ENCODE measurements at regions of chr2 and their contacts with region 1.

Region 1: DNA sequence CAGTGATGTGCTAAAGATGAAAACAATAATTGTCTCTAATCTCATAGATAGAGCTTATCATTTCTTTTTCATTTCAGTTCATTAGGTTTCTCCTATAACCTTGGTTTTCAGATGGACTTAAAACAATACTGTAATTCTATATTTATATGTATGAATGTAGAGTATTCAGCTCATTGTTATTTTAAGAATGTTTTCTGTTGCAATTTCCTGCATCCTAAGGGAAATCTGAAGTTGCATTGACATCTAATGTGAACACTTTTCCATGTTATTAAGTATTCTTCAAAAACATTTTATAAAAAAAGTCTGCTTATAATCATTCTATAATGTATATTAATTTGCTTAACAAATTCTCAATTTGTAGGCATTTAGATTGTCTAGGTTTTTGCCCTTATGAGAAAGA is 288.9 kb downstream of the XIRP2 start:
- DNase-seq: peak; percentile 54
- ATAC-seq: 0 out of 2 replicates have a peak, but pooled peaks have one; percentile 22
- H3K4me3 ChIP-seq: no peak overlapping the region
- H3K27ac ChIP-seq: no peak overlapping the region
- H3K4me1 ChIP-seq: peaks cover 5% of the 10 kb centered on the region
- H3K27me3 ChIP-seq: no peaks in the 10 kb centered on the region
- CTCF ChIP-seq: no peak
- POLR2A ChIP-seq: no peak
- RAD21 ChIP-seq: no peak

Region 2: DNA sequence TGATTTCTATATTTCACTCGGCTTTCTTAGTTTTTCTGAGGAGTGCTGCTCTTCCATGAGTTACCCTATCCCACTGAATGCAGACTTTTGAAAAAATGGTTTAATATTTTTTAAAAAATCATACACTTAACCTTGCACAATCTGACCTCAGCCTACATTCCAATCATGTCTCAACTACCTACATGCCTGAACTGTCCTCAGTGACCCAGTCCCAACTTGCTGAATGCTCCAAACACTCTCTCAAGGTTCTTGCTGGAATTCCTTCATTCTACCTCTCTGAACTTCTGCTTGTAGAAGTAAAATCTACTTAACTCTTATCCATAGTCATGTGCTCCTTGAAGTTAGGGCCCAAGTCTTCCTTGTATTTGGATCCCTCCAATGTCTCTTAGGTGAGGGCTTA is 107.3 kb before region 1 on chr2:
- CTCF ChIA-PET with region 1: no interaction called
- POLR2A ChIA-PET with region 1: no interaction called
- dilution Hi-C with region 1: no loop called
- in situ Hi-C with region 1: no loop called
- intact Hi-C with region 1: no loop called
- DNase-seq: peak; percentile 4
- ATAC-seq: peak; percentile 56
- H3K4me3 ChIP-seq: no peak overlapping the region
- H3K27ac ChIP-seq: no peak overlapping the region
- H3K4me1 ChIP-seq: no peaks in the 10 kb centered on the region
- H3K27me3 ChIP-seq: no peaks in the 10 kb centered on the region
- CTCF ChIP-seq: no peak
- POLR2A ChIP-seq: no peak
- RAD21 ChIP-seq: no peak

Region 3: DNA sequence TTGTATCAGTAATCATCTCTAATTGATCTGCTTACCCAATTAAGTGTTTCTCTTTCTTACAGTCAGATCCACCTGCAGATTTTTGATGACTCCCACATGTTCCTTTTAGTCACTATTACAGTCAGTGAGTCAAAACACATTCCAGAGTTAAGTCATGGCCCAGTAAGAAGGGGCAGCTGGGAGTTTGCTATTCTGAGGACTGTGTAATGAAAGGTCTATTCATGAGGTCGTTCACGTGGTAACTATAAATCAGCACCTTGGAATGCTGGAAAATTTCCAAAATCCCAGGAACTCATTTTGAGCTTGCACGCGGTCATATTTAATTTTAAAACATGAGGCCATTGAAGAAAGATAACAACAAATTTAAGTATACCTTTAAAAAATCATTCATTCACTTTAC is 36.4 kb before region 1 on chr2:
- CTCF ChIA-PET with region 1: no interaction called
- POLR2A ChIA-PET with region 1: no interaction called
- dilution Hi-C with region 1: no loop called
- in situ Hi-C with region 1: no loop called
- intact Hi-C with region 1: loop called (anchors 5 kb)
- DNase-seq: peak; percentile 100
- ATAC-seq: peak; percentile 98
- H3K4me3 ChIP-seq: no peak overlapping the region
- H3K27ac ChIP-seq: no peak overlapping the region
- H3K4me1 ChIP-seq: peaks cover 10% of the 10 kb centered on the region
- H3K27me3 ChIP-seq: no peaks in the 10 kb centered on the region
- CTCF ChIP-seq: no peak
- POLR2A ChIP-seq: no peak
- RAD21 ChIP-seq: no peak

Region 4: DNA sequence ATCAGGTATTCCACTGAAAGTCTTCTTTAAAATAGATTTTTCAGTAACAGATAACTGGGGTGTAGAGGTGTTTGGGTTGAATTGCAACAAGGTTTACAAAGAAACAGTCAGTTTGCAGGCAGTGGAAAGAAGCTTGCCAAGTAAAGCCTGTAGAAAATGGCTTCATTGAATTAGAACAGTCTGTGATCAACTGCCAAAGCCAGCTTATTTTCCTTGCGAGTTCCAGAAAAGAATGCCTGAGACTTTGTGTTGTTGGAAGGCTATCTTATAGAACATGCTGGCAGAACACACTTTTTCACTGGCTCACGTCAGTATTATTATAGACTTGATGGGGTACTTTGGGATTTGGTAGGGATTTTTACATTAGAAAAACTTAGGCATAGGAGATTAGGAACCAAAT is 312.1 kb after region 1 on chr2:
- CTCF ChIA-PET with region 1: no interaction called
- POLR2A ChIA-PET with region 1: no interaction called
- dilution Hi-C with region 1: no loop called
- in situ Hi-C with region 1: no loop called
- intact Hi-C with region 1: no loop called
- DNase-seq: no peak
- ATAC-seq: no peak
- H3K4me3 ChIP-seq: no peak overlapping the region
- H3K27ac ChIP-seq: no peak overlapping the region
- H3K4me1 ChIP-seq: no peaks in the 10 kb centered on the region
- H3K27me3 ChIP-seq: no peaks in the 10 kb centered on the region
- CTCF ChIP-seq: no peak
- POLR2A ChIP-seq: no peak
- RAD21 ChIP-seq: no peak

Region 5: DNA sequence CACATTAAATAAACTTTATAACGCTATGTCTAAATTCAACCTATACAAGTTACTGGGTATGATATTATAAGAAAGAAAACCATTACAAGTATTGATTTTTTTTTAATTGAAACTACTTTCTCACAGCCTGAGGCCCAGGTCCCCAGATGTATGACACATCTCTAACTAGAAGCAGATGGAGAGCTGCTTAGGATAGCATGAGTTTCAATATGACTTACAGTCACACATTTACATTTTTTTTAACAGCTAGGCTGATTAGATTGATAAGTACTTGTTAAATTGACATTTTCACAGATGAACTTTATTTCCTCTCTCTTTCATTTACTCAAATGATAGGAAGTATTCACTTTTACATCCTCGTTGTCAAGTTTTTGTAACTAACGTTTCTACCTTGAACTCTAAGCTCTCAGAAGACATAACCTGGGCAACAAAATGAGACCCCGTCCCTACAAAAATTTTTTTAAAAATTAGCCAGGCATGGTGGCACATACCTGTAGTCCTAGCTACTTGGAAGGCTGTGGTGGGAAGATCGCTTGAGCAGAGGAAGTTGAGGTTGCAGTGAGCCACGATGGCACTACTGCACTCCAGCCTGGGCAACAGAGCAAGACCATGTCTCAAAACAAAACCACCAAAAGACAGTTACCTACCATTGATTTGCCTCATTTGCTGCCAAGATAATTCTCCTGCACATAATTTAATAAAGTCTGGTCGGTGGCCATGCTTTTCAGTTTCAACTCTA is 1017.8 kb after region 1 on chr2:
- CTCF ChIA-PET with region 1: no interaction called
- POLR2A ChIA-PET with region 1: no interaction called
- dilution Hi-C with region 1: no loop called
- in situ Hi-C with region 1: no loop called
- intact Hi-C with region 1: no loop called
- DNase-seq: peak; percentile 63
- ATAC-seq: peak; percentile 27; the same call in 1 of the 2 replicates
- H3K4me3 ChIP-seq: no peak overlapping the region
- H3K27ac ChIP-seq: no peak overlapping the region
- H3K4me1 ChIP-seq: peaks cover 19% of the 10 kb centered on the region
- H3K27me3 ChIP-seq: no peaks in the 10 kb centered on the region
- CTCF ChIP-seq: no peak
- POLR2A ChIP-seq: no peak
- RAD21 ChIP-seq: no peak

Measured in IMR-90 (cell line).